ENCODE measurements at regions of chr5 and their contacts with region 1.

Region 1: GRCh38 chr5:114101153-114101552 is 260.7 kb upstream of the KCNN2 start:
- DNase-seq: peak; percentile 63
- H3K4me3 Mint-ChIP-seq: no peak overlapping the region
- H3K27ac Mint-ChIP-seq: no peak overlapping the region
- H3K4me1 Mint-ChIP-seq: no peaks in the 10 kb centered on the region
- H3K27me3 Mint-ChIP-seq: peaks cover 35% of the 10 kb centered on the region
- CTCF ChIP-seq: peak; percentile 62

Region 2: DNA sequence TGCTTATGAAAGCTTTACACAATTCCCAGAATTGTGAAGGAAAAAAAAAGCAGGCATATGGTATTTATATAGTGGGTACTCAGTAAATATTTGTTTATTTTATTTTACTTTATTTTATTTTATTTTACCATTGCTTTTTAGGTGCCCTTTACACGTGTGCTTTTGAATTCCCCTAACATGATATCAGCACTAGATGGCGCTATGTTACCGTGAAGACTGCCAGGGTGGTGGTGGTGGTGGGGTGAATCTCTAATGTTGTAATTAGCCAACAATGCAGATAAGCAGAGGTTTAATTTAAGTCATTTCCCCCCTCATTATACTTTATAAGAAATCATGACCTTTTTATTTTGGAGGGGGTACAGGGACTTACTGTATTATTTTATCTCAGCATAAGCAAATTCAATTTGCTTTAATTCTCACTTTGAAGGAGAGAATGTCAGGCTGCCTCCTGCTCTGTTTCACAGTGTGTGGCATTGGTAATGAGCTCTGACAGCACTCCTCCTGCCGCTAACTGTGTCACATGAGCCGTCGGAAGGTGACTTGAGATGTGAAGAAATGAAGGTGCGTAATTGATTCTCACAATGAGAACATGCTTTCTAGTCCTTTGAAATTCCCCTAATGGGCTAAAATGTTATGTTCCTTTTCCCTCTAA is 422.1 kb before region 1 on chr5:
- CTCF ChIA-PET with region 1: no interaction called
- intact Hi-C with region 1: loop called (anchors 1 kb)
- DNase-seq: peak; percentile 61
- H3K4me3 Mint-ChIP-seq: no peak overlapping the region
- H3K27ac Mint-ChIP-seq: no peak overlapping the region
- H3K4me1 Mint-ChIP-seq: no peaks in the 10 kb centered on the region
- H3K27me3 Mint-ChIP-seq: peaks cover 27% of the 10 kb centered on the region
- CTCF ChIP-seq: peak; percentile 78

Region 3: GRCh38 chr5:113989278-113989912 is 111.8 kb before region 1 on chr5:
- CTCF ChIA-PET with region 1: no interaction called
- intact Hi-C with region 1: no loop called
- DNase-seq: no peak
- H3K4me3 Mint-ChIP-seq: no peak overlapping the region
- H3K27ac Mint-ChIP-seq: no peak overlapping the region
- H3K4me1 Mint-ChIP-seq: no peaks in the 10 kb centered on the region
- H3K27me3 Mint-ChIP-seq: no peaks in the 10 kb centered on the region
- CTCF ChIP-seq: no peak

Region 4: GRCh38 chr5:114056185-114056538 is 45.0 kb before region 1 on chr5:
- CTCF ChIA-PET with region 1: no interaction called
- intact Hi-C with region 1: no loop called
- DNase-seq: no peak
- H3K4me3 Mint-ChIP-seq: no peak overlapping the region
- H3K27ac Mint-ChIP-seq: no peak overlapping the region
- H3K4me1 Mint-ChIP-seq: no peaks in the 10 kb centered on the region
- H3K27me3 Mint-ChIP-seq: peaks cover 63% of the 10 kb centered on the region
- CTCF ChIP-seq: no peak

Region 5: DNA sequence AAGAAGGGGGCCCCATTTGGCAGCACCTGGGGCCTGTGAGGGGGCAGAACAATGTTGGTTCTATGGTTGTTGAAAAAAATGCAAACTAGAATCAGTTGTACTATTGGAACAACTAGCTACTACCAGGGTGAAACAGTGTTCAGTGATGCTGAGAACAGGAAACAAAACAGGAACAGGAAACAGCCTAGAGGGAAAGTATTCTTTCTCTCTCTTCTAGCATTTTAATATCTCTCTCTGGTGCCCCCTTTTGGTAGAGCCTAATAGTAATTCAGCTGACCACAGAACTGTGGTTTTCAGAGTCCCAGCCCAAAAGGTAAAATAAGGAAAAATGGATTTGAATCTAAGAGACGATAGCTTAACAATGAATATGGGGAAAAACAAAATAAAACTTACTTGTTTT is 122.7 kb after region 1 on chr5:
- CTCF ChIA-PET with region 1: no interaction called
- intact Hi-C with region 1: loop called (anchors 5 kb)
- DNase-seq: peak; percentile 15
- H3K4me3 Mint-ChIP-seq: no peak overlapping the region
- H3K27ac Mint-ChIP-seq: no peak overlapping the region
- H3K4me1 Mint-ChIP-seq: no peaks in the 10 kb centered on the region
- H3K27me3 Mint-ChIP-seq: no peaks in the 10 kb centered on the region
- CTCF ChIP-seq: no peak

Region 6: DNA sequence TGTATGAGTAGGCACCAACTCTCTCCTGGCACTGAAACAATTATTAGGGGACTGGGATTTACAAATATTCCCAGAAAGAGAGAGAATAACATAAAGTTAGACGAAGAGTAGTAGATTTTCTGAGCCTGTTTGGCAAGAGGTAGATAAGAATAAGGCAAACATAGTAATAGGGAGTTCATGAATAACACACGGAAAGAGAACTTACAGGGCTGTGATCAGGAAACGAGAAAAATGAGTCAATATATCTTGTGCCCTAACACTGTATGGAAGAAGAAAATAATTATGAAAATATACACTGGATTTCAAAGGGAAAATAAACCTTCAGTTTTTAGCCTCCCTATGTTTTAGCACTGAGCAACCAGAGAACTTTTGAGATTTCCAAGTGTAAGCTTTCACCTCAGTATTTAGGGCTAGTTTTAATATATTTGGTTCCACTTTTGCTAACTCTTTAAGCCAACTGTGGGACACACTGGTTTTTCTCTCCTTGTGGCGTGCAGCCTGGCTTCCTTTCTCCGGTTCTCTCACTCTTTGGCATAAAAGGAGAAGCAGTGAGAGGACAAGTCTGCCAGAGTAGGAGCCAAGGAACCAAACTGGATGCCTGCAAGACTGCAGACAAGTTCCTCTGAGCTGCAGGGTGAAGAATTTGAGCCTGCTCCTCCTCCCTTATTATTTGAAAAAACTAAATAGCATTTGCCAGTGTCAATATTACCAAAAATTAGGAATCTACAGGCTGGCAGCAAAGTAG is 254.1 kb after region 1 on chr5:
- CTCF ChIA-PET with region 1: no interaction called
- intact Hi-C with region 1: loop called (anchors 1 kb)
- DNase-seq: no peak
- H3K4me3 Mint-ChIP-seq: no peak overlapping the region
- H3K27ac Mint-ChIP-seq: no peak overlapping the region
- H3K4me1 Mint-ChIP-seq: no peaks in the 10 kb centered on the region
- H3K27me3 Mint-ChIP-seq: peaks cover 13% of the 10 kb centered on the region
- CTCF ChIP-seq: no peak

Region 7: DNA sequence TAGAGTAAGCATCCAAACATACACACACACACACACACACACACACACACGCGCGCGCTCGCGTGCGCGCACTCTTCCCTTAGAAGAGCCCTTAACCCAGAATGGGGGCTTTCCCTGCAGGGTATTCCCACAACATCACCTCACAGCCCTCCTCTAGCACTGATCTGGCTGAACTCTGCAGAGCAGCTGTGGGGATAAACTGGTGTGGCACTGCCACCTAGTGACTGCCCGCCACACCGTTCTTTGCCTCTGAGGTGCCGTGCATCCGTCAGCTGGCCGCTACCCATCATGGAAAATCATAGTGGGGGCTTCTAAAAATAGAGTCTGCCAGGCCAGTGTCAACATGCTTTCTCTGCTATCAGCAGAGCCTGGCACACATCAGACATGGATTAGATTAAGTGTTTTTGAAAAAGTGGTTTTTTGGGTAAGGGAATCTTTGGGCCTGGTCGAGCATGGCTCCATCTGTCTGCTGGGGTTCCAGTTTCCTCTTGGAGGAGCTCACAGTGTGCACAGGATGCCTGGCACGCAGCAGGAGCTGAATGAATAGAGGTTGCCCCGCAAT is 348.8 kb after region 1 on chr5:
- CTCF ChIA-PET with region 1: no interaction called
- intact Hi-C with region 1: loop called (anchors 1 kb)
- DNase-seq: peak; percentile 78
- H3K4me3 Mint-ChIP-seq: no peak overlapping the region
- H3K27ac Mint-ChIP-seq: no peak overlapping the region
- H3K4me1 Mint-ChIP-seq: no peaks in the 10 kb centered on the region
- H3K27me3 Mint-ChIP-seq: peaks cover 56% of the 10 kb centered on the region
- CTCF ChIP-seq: peak; percentile 82